GM10248 (cell line): ENCODE measurements at regions of chr13 and their contacts with region 1.

Region 1: GRCh38 chr13:24995226-24995804 is 100.6 kb upstream of the PABPC3 start:
- DNase-seq: peak; percentile 74
- CTCF ChIP-seq: peak; percentile 80

Region 2: DNA sequence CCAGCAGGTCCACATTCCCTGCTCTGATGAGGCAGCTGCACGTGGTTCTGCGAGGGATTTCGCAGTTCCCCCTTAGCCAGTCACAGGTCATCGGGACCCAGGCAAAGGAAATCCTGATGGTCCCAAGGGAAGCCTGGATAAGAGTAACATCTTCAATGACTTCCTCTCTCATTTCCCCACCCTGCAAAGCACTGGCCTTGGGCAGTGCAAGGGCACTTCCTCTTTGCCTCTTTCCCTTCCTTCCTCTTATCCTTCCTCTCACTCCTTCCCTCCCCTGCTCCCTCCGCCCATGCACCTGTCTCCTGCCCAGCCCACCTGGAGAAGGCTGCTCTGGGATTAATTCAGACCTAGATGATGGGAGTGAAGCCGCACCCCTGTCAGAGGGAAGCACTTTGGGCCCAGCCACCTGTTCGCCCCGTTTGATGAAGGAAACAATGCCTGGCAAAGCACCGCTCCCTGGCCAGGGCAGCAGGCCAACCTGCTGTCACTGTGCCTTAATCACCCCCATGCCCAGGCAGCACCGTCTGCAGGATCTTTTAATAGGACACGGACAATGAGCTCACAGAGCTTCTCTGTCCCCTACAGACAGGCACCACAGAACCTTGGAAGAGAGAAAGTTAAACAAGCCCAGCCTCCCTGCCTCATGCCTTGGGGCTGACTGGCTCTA is 12.8 kb before region 1 on chr13:
- CTCF ChIA-PET with region 1: interaction called, 36 read pairs
- POLR2A ChIA-PET with region 1: no interaction called
- DNase-seq: no peak
- CTCF ChIP-seq: no peak